CD4-positive, alpha-beta memory T cell (primary cell): ENCODE measurements at regions of chr1 and their contacts with region 1.

Region 1: DNA sequence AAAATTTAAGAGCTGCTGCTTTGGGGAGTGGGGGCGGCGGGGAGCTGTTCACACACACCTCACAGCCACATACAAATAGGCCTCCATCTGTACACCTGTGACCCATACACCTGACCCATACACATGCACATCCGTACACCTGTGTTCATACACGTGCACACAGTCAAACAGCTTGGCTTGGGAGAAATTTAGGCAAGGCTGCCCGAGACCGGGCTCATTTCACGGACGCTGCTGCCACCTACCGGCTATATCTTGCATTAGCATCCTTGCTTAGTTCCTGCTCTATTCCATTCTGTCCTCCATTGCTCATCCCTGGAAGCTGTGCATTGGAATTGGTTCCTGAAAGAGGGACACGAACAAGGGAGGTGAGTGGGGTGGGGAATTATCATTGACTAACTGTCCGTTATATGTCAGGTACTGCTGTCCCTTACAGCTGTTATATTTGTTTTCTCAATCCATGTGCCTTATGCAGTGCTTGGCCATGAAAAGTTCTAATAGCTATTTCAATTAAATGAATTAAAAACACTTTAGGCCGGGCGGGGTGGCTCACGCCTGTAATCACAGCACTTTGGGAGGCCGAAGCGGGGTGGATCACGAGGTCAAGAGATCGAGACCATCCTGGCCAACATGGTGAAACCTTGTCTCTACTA is 37.1 kb upstream of the EPB41 start:
- DNase-seq: peak; percentile 68 to 75 (median 71)
- H3K4me3 ChIP-seq: no peak overlapping the region
- H3K4me3 Mint-ChIP-seq: no peak overlapping the region
- H3K27ac ChIP-seq: no peak overlapping the region
- H3K27ac Mint-ChIP-seq: peak overlapping the region in 3 of 7 donors; percentile 32 to 57 (median 42)
- H3K4me1 ChIP-seq: peaks cover 5% of the 10 kb centered on the region
- H3K4me1 Mint-ChIP-seq: peaks cover 6 to 10% (median 7%) of the 10 kb centered on the region in 4 donors
- H3K27me3 ChIP-seq: no peaks in the 10 kb centered on the region
- H3K27me3 Mint-ChIP-seq: peaks cover 1 to 7% of the 10 kb centered on the region in 2 donors

Region 2: GRCh38 chr1:28359592-28360239 is 517.5 kb before region 1 on chr1:
- CTCF ChIA-PET with region 1: interaction called, 114 read pairs
- POLR2A ChIA-PET with region 1: interaction called, 9 read pairs
- intact Hi-C with region 1: no loop called
- DNase-seq: peak; percentile 54 to 73 (median 61)
- H3K4me3 ChIP-seq: no peak overlapping the region
- H3K4me3 Mint-ChIP-seq: no peak overlapping the region
- H3K27ac ChIP-seq: no peak overlapping the region
- H3K27ac Mint-ChIP-seq: no peak overlapping the region
- H3K4me1 ChIP-seq: no peaks in the 10 kb centered on the region
- H3K4me1 Mint-ChIP-seq: peaks cover 0 to 4% (median 2%) of the 10 kb centered on the region in 4 donors
- H3K27me3 ChIP-seq: no peaks in the 10 kb centered on the region
- H3K27me3 Mint-ChIP-seq: no peaks in the 10 kb centered on the region

Region 3: DNA sequence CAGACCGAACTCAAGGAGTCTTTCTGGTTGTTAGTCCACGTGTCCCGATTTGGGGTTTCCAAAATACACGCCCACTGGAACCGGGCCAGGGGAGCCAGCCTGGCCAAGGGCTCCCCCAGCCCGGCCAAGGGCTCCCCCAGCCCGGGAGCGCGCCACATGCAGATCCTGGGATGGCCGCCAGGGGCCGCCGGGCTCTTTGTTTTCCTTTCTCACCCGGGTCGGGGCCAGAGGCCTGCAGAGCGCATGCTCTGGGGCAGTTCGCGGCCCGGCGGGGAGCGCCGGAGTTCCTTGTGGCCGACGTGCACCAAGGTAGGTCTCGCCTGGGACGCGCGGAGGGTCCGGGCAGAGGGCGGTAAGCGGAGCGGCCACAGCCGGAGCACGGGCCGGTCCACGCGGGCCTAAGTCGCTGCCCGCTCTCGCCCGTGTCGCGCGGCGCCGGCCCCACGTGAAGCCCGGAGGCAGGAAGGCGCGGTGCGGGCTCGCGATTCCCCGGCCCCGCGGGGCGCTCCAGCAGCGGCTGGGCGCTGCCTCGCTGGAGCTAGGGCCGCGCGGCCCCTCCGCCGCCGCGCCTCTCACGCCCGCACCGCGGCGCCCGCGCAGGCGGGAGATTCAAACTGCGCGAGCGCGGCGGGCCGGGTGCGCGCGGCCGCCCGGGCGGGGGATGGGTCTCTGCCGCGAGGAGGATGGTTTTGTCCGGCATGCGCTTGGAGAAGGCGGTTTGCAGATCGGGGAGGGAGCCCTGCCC is 359.1 kb before region 1 on chr1:
- CTCF ChIA-PET with region 1: interaction called, 20 read pairs
- POLR2A ChIA-PET with region 1: interaction called, 3 read pairs
- intact Hi-C with region 1: loop called (anchors 1 kb)
- DNase-seq: peak; percentile 84 to 87 (median 86)
- H3K4me3 ChIP-seq: peak overlapping the region; percentile 33 to 65
- H3K4me3 Mint-ChIP-seq: peak overlapping the region; percentile 85 to 92 (median 90)
- H3K27ac ChIP-seq: peak overlapping the region; percentile 56
- H3K27ac Mint-ChIP-seq: peak overlapping the region; percentile 67 to 94 (median 85)
- H3K4me1 ChIP-seq: peaks cover 27% of the 10 kb centered on the region
- H3K4me1 Mint-ChIP-seq: peaks cover 15 to 32% (median 21%) of the 10 kb centered on the region in 4 donors
- H3K27me3 ChIP-seq: no peaks in the 10 kb centered on the region
- H3K27me3 Mint-ChIP-seq: no peaks in the 10 kb centered on the region

Region 4: GRCh38 chr1:28648474-28649198 is 228.6 kb before region 1 on chr1 and contains the start of gene RNU11:
- CTCF ChIA-PET with region 1: interaction called, 23 read pairs
- POLR2A ChIA-PET with region 1: interaction called, 22 read pairs
- intact Hi-C with region 1: loop called (anchors 1 kb)
- DNase-seq: peak; percentile 93 to 95 (median 95)
- H3K4me3 ChIP-seq: peak within 1 kb of the TSS; percentile 55 to 91
- H3K4me3 Mint-ChIP-seq: peak within 1 kb of the TSS; percentile 84 to 94 (median 90)
- H3K27ac ChIP-seq: peak within 1 kb of the TSS; percentile 96
- H3K27ac Mint-ChIP-seq: peak within 1 kb of the TSS; percentile 99 to 100 (median 99)
- H3K4me1 ChIP-seq: peaks cover 31% of the 10 kb centered on the region
- H3K4me1 Mint-ChIP-seq: peaks cover 15 to 36% (median 25%) of the 10 kb centered on the region in 4 donors
- H3K27me3 ChIP-seq: no peaks in the 10 kb centered on the region
- H3K27me3 Mint-ChIP-seq: no peaks in the 10 kb centered on the region
- total RNA-seq, gene RNU11: not detected

Region 5: GRCh38 chr1:28782011-28782410 is 95.2 kb before region 1 on chr1:
- CTCF ChIA-PET with region 1: interaction called, 80 read pairs
- POLR2A ChIA-PET with region 1: interaction called, 8 read pairs
- intact Hi-C with region 1: loop called (anchors 1 kb)
- DNase-seq: no peak
- H3K4me3 ChIP-seq: no peak overlapping the region
- H3K4me3 Mint-ChIP-seq: no peak overlapping the region
- H3K27ac ChIP-seq: no peak overlapping the region
- H3K27ac Mint-ChIP-seq: peak overlapping the region in 2 of 7 donors; percentile 22 to 41
- H3K4me1 ChIP-seq: no peaks in the 10 kb centered on the region
- H3K4me1 Mint-ChIP-seq: peaks cover 4 to 9% (median 5%) of the 10 kb centered on the region in 4 donors
- H3K27me3 ChIP-seq: no peaks in the 10 kb centered on the region
- H3K27me3 Mint-ChIP-seq: peaks cover 0 to 3% of the 10 kb centered on the region in 2 donors

Region 6: DNA sequence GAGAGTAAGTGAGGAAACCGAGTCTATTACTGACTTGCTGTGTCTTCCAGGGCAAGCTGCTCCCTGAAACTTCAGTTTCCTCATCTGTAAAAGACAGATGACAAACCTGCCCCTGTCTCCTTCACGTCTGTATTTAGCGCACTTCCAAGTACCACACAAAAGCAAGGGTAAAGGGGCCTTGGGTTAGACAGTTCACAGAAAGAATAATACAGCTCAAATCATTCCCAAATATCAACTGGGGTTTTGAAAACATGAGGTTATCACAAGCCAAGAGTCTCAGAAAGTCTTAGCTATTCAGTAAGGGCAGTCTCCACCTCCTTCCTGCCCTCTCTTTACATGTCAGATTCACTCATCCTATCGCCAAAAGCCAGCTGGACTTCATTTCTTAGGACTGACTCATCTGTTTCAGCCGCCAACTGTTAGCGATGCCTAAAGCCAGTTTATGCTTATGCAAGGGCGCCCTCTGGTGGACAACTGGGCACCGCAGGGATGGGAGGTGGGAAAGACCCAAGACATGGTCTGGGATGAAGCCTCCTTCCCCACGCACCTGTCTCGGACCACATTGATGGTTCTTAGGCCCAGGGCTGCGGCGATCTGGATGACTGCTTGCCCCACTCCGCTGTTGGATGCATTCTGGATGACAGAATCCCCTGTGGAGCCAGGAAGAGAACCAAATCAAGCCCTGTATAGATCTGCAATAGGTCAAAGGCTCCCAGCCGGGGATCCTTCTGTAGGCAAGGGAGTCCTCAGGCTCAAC is 325.5 kb after region 1 on chr1:
- CTCF ChIA-PET with region 1: interaction called, 133 read pairs
- POLR2A ChIA-PET with region 1: interaction called, 4 read pairs
- intact Hi-C with region 1: loop called (anchors 1 kb)
- DNase-seq: peak; percentile 73 to 81 (median 76)
- H3K4me3 ChIP-seq: no peak overlapping the region
- H3K4me3 Mint-ChIP-seq: no peak overlapping the region
- H3K27ac ChIP-seq: no peak overlapping the region
- H3K27ac Mint-ChIP-seq: peak overlapping the region in 2 of 7 donors; percentile 12 to 24
- H3K4me1 ChIP-seq: no peaks in the 10 kb centered on the region
- H3K4me1 Mint-ChIP-seq: peaks cover 0 to 7% (median 2%) of the 10 kb centered on the region in 4 donors
- H3K27me3 ChIP-seq: no peaks in the 10 kb centered on the region
- H3K27me3 Mint-ChIP-seq: no peaks in the 10 kb centered on the region